ENCODE measurements at regions of chr22 and their contacts with region 1.

Region 1: GRCh38 chr22:46542011-46542985 is 4.9 kb upstream of the CELSR1 start:
- DNase-seq: peak; percentile 53 to 87 (median 71)
- H3K4me3 ChIP-seq: no peak overlapping the region
- H3K27ac ChIP-seq: no peak overlapping the region
- H3K27me3 ChIP-seq: peaks cover 0 to 31% (median 20%) of the 10 kb centered on the region in 45 donors
- CTCF ChIP-seq: peak; percentile 63 to 97 (median 84)

Region 2: GRCh38 chr22:46006379-46007002 is 535.8 kb before region 1 on chr22:
- intact Hi-C with region 1: loop called in 1 of 2 experiments (anchors 10 kb)
- DNase-seq: peak; percentile 90 to 95 (median 92)
- H3K4me3 ChIP-seq: peak overlapping the region in 38 of 59 donors; percentile 2 to 47 (median 24)
- H3K27ac ChIP-seq: peak overlapping the region in 58 of 59 donors; percentile 37 to 94 (median 83)
- H3K27me3 ChIP-seq: no peaks in the 10 kb centered on the region
- CTCF ChIP-seq: peak; percentile 90 to 100 (median 99)

Region 3: DNA sequence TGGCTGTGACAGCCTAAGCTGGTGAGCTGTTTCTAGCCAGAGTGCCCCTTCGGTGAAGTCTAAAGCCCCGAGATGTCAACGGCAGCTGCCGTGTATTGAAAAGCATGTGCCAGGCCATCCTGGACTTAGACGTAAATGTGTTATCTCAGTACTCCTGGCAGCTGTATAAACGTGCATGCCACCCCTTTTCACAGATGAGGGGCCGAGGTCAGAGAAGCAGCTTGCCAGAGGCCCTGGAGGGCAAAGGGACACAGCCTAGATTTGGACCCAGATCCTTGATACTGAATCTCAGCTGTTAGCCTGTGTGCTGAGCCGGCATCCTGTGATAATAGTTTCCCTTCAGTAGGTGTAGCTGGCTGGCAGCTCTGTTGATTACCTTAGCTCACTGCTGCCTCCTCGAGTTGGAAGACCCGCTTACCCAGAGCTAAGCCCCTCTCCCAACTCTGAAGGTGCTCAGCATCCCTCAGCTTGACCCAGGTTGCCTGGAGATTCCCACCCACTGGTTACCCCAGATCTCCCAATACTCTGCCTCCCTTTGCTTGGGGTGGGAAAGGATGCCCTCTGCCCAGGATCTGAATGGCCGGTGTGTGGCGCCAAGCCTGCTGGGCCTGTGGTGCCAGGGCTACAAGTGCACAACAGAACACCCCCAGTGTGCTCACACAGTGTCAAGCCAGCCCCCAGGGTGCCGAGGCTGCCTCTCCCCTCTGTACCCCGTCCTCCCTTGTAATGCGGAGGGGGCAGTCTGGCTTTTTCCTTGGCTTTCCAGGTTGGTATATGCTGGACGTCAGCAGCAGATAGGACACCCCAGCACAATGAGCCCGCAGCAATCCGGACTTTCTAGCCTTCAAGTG is 505.5 kb before region 1 on chr22:
- intact Hi-C with region 1: no loop called
- DNase-seq: peak in 4 of 10 donors; percentile 25 to 51 (median 40)
- H3K4me3 ChIP-seq: peak overlapping the region; percentile 56 to 97 (median 86)
- H3K27ac ChIP-seq: peak overlapping the region; percentile 67 to 100 (median 98)
- H3K27me3 ChIP-seq: no peaks in the 10 kb centered on the region
- CTCF ChIP-seq: peak in 9 of 56 donors; percentile 7 to 33 (median 14)

Region 4: DNA sequence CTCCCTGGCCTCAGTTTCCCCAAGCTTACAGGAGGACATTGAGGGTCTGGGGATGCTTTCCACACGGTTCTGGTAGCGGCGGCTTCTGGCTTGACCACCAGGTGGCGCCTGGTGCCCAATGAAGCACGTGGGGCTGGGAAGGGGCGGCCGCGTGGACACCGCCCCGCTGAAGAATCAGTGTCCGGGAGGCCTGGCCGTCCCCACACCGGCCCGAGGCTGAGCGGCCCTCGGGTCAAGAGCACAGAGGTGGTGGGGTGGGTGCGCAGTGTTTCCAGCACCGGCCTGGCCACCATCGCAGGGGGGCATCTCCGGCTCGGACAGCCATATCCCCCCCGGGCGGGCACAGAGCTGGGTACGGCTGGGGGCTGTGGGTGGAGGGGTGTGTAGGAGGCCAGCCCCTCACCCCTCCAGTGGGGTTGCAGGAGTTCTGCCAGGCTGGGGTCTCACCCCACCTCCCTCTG is 419.8 kb before region 1 on chr22:
- intact Hi-C with region 1: loop called (anchors 5 kb)
- DNase-seq: peak; percentile 61 to 80 (median 70)
- H3K4me3 ChIP-seq: peak overlapping the region in 23 of 59 donors; percentile 6 to 53 (median 28)
- H3K27ac ChIP-seq: no peak overlapping the region
- H3K27me3 ChIP-seq: no peaks in the 10 kb centered on the region
- CTCF ChIP-seq: peak; percentile 87 to 99 (median 97)

Region 5: GRCh38 chr22:46355996-46356471 is 186.3 kb before region 1 on chr22:
- intact Hi-C with region 1: loop called in 1 of 2 experiments (anchors 2 kb)
- DNase-seq: no peak
- H3K4me3 ChIP-seq: no peak overlapping the region
- H3K27ac ChIP-seq: no peak overlapping the region
- H3K27me3 ChIP-seq: no peaks in the 10 kb centered on the region
- CTCF ChIP-seq: no peak

Region 6: DNA sequence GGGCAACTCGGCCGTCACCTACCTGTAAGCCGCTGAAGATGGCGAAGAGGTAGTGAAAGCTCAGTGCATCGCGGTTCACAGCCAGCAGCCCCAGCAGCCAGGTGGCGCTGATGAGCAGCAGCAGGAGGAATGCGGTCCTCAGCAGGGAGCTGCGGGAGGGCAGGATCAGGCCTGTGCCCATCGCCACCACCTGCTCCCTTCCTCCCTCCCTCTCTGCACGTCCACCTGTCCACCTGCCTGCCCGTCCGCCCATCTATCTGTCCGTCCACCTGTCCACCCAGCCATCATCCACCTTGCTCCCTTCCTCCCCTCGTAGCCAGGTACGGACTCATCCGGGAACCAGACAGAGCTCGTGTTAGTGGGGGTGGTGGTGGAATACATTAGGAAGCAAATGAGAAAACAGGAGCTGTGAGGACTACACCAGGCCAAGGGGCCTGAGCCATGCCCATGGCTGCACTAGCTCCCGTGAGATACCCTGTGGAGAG is 174.5 kb before region 1 on chr22:
- intact Hi-C with region 1: loop called in 1 of 2 experiments (anchors 5 kb)
- DNase-seq: peak in 2 of 10 donors; percentile 43 to 65
- H3K4me3 ChIP-seq: no peak overlapping the region
- H3K27ac ChIP-seq: no peak overlapping the region
- H3K27me3 ChIP-seq: peaks cover 0 to 10% (median 0%) of the 10 kb centered on the region in 45 donors
- CTCF ChIP-seq: peak; percentile 28 to 85 (median 72)

Region 7: DNA sequence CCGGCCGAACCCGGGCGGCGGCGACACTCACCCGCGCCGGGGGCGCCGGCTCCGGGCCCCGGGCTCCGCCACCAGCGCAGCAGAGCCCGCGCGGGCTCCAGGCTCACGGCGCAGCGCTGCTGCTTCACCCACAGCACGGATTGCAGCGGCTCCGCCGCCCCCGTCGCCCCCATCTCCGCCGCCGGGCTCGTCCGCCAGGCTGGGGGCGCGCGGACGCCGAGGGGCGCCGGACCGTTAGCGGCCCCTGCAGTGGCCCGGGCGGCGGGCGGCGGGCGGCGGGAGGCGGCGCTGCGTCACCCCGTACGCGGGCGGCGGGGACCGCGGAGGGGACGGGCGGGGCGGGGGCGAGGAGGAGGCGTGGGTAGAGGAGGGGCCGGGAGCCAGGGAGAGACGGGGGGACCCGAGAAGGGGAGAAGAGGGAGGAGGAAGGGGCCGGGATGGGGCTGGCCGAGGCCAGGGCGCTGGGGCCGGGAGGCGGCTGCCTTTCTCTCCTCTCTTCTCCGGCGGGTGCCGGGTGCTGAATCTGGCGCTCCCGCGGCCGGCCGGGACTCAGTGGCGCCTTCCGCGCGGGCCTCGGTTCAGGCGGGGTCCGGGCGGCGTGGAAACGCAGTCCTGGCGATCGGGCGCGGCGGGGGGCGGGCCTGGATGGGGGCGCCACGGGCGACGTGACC is 195.8 kb after region 1 on chr22 and contains the start of gene CERK:
- intact Hi-C with region 1: no loop called
- DNase-seq: peak in 7 of 10 donors; percentile 54 to 80 (median 61)
- H3K4me3 ChIP-seq: peak within 1 kb of the TSS; percentile 57 to 94 (median 83)
- H3K27ac ChIP-seq: peak within 1 kb of the TSS in 57 of 59 donors; percentile 42 to 93 (median 86)
- H3K27me3 ChIP-seq: no peaks in the 10 kb centered on the region
- CTCF ChIP-seq: peak in 2 of 56 donors; percentile 4 to 9
- total RNA-seq, gene CERK: 24.8 to 72.6 (median 52.4) TPM